Thyroid gland (tissue), 4 donors: ENCODE measurements at regions of chr6 and their contacts with region 1.

Region 1: GRCh38 chr6:134199848-134200606 is 117.9 kb downstream of the SGK1 start:
- DNase-seq: no peak
- H3K4me3 ChIP-seq: no peak overlapping the region
- H3K27ac ChIP-seq: peak overlapping the region; percentile 48 to 86 (median 63)
- H3K4me1 ChIP-seq: peaks cover 31 to 33% of the 10 kb centered on the region in 2 donors
- H3K27me3 ChIP-seq: no peaks in the 10 kb centered on the region
- CTCF ChIP-seq: peak in 1 of 6 experiments; percentile 7
- POLR2A ChIP-seq: no peak

Region 2: DNA sequence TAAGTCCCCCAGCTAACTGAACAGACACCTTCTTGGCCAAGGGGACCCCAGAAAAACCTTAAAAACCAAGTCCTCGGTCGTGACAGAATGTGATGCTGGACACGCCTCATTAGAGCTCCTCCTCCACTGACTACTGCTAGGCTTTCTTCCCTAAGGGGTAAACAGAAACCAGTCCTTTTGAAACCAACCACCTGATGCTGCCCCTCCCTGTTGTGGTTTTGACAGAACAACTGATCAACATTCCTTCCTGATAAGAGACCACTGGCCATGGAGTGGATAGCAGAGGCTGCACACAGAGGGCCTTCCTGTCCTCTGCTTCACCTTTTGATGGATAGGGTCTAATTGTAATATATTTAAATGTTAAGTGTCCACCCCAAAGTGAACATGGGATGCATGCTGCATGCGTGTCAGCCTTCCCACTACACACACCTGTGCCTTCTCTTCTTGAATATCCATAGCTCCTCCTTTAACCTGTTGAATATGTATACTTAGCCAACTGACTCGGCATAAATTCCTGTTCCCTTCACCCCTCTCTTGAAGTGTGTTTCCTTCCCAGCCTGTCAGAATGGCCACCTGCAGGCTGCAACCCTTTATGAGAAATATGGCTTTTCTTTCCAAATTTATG is 119.7 kb before region 1 on chr6:
- intact Hi-C with region 1: no loop called
- DNase-seq: no peak
- H3K4me3 ChIP-seq: no peak overlapping the region
- H3K27ac ChIP-seq: no peak overlapping the region
- H3K4me1 ChIP-seq: no peaks in the 10 kb centered on the region
- H3K27me3 ChIP-seq: no peaks in the 10 kb centered on the region
- CTCF ChIP-seq: no peak
- POLR2A ChIP-seq: no peak

Region 3: GRCh38 chr6:134253681-134254080 is 53.7 kb after region 1 on chr6:
- intact Hi-C with region 1: loop called (anchors 10 kb)
- DNase-seq: peak; percentile 77 to 82
- H3K4me3 ChIP-seq: no peak overlapping the region
- H3K27ac ChIP-seq: peak overlapping the region; percentile 82 to 96 (median 84)
- H3K4me1 ChIP-seq: peaks cover 19 to 33% of the 10 kb centered on the region in 2 donors
- H3K27me3 ChIP-seq: no peaks in the 10 kb centered on the region
- CTCF ChIP-seq: no peak
- POLR2A ChIP-seq: no peak